ENCODE measurements at regions of chr9 and their contacts with region 1.

Region 1: DNA sequence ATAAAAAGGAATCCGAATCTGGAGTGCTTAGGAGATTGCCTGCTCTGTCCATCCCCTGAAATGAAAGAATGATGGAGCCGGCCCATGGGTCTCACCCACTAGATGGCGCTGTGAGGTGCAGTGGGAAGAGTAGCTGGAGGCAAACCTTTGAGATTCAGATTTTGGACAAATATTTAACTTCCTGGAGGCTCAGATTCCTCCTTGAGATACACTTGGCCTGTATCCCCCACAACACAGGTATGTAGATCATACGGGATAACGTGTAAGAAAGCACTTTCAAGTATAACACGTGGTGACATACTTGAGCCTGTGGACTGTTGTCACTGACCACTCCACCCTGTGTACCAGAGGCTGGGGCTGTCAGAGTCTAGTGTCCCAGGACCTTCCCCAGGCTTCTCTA is 32.3 kb downstream of the TRMO start:
- DNase-seq: peak; percentile 86
- ATAC-seq: peak; percentile 75
- H3K4me3 Mint-ChIP-seq: no peak overlapping the region
- H3K27ac Mint-ChIP-seq: no peak overlapping the region
- H3K4me1 Mint-ChIP-seq: peaks cover 7% of the 10 kb centered on the region
- H3K27me3 Mint-ChIP-seq: no peaks in the 10 kb centered on the region

Region 2: GRCh38 chr9:97863314-97863713 is 26.7 kb before region 1 on chr9:
- CTCF ChIA-PET with region 1: interaction called, 11 read pairs
- POLR2A ChIA-PET with region 1: no interaction called
- intact Hi-C with region 1: no loop called
- DNase-seq: no peak
- ATAC-seq: no peak
- H3K4me3 Mint-ChIP-seq: no peak overlapping the region
- H3K27ac Mint-ChIP-seq: no peak overlapping the region
- H3K4me1 Mint-ChIP-seq: peaks cover under 1% of the 10 kb centered on the region
- H3K27me3 Mint-ChIP-seq: peaks cover 52% of the 10 kb centered on the region

Region 3: DNA sequence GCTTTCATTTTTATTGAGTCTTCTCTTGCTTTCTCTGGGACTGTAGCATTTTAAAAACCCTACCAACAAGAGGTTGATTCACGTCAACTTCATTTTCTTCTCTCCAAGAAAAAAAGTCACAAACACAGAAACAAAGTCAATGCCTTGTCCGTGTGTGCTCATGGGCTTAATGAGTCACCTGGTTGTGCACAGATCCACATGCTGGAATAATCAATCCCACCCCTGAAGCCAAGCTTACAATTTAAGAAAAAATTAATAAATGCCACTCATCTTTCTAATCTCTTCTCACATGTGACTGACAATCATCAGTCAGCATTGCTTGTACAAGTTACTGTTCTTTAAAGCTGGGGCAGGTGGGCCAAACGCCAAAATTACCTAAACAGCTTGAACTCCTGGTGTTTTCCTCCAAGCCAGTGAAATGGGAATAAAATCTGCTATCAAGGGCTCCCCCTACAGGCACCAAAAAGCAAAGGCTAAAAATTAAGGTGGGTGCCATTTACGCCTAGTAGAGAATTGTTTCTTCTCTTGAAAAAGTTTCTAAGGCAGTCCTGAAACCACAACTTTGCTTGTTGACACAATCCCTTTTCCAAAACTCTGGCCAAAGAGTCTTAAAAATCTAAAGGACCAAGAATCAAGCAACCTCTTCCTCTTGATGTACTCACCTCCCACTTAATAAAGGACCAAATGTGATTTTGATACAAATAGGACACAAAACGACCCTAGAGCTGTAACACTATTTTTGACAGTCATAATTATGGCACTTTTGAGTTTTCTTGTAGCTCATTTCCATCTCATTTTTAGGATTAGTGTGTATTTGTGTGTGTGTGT is 10.9 kb after region 1 on chr9:
- CTCF ChIA-PET with region 1: interaction called, 113 read pairs
- POLR2A ChIA-PET with region 1: no interaction called
- intact Hi-C with region 1: no loop called
- DNase-seq: no peak
- ATAC-seq: no peak
- H3K4me3 Mint-ChIP-seq: no peak overlapping the region
- H3K27ac Mint-ChIP-seq: peak overlapping the region; percentile 56
- H3K4me1 Mint-ChIP-seq: peaks cover 53% of the 10 kb centered on the region
- H3K27me3 Mint-ChIP-seq: no peaks in the 10 kb centered on the region

Region 4: DNA sequence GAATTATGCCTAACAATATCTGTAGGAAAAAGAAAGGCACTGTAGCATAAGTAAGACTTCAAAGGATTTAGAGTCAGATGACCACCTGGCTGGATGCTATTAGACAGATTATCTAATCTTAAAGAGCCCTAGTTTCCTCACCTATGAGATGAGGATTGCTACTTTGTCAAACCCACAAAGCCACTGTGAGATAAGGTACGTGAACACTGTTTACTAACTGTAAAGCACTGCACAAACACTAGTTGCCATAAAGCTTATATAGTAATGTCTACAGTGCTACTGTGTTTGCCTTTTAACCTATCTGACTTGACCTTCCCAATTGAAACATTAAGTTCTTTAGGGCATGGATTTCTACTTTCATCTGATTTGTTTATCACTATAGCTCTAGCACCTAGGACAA is 21.9 kb after region 1 on chr9:
- CTCF ChIA-PET with region 1: interaction called, 18 read pairs
- POLR2A ChIA-PET with region 1: no interaction called
- intact Hi-C with region 1: no loop called
- DNase-seq: no peak
- ATAC-seq: no peak
- H3K4me3 Mint-ChIP-seq: no peak overlapping the region
- H3K27ac Mint-ChIP-seq: no peak overlapping the region
- H3K4me1 Mint-ChIP-seq: peaks cover 53% of the 10 kb centered on the region
- H3K27me3 Mint-ChIP-seq: no peaks in the 10 kb centered on the region